ENCODE measurements at regions of chr1 and their contacts with region 1.

Region 1: DNA sequence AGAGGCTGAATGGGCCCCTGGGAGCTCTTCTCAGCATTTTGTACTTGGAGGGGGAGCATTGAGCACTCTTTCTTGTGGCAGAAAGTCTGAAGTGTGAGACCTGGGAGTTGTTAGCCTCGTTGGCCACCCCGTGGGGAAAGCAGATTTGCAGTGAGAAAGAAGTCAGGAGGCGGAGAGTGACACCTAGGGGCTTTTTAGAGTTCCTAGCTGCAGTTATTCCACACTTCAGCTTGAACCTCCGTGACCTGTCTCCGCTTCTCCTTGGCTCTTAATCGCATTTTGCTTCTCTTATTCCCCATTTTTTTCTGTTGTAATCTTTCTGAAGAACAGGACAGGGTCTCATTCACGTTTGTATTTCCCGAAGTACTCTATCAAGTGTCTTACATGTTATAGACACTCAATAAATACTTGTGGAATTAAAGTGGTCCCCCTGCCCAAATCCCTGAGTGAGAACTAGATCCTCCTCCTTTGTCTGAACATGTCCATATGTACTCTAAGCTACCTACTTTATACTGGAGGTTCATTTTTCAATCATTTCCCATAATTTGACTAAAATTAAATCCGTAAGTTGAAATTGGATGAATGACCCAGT is 14.5 kb upstream of the C1orf141 start:
- DNase-seq: peak; percentile 16 to 81 (median 62)
- ATAC-seq: peak; percentile 90
- H3K4me3 ChIP-seq: no peak overlapping the region
- H3K4me3 Mint-ChIP-seq: no peak overlapping the region
- H3K27ac ChIP-seq: no peak overlapping the region
- H3K27ac Mint-ChIP-seq: no peak overlapping the region
- H3K4me1 ChIP-seq: peaks cover 6% of the 10 kb centered on the region
- H3K4me1 Mint-ChIP-seq: peaks cover 23% of the 10 kb centered on the region
- H3K27me3 ChIP-seq: no peaks in the 10 kb centered on the region
- H3K27me3 Mint-ChIP-seq: peaks cover 7% of the 10 kb centered on the region
- CTCF ChIP-seq: peak; percentile 85

Region 2: DNA sequence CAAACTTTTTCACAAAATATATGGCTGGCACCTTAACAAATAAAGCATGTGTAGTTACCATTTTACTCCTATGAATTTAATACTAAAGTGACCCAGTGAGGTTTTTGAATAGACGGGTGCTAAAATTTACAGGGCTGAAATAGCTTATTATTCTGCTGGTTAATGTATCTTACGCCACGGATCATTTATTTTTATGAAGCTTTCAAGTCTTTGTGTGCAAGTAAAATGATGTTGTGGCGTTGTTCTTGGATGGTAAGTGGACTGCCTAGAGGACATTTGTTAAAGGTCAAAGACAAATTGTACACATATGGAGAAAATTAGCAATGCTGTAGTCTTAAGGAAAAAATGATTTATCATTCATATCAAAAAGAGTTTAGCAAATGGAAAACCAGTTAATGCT is 371.0 kb before region 1 on chr1:
- CTCF ChIA-PET with region 1: interaction called, 12 read pairs
- POLR2A ChIA-PET with region 1: no interaction called
- intact Hi-C with region 1: no loop called
- DNase-seq: no peak
- ATAC-seq: no peak
- H3K4me3 ChIP-seq: no peak overlapping the region
- H3K4me3 Mint-ChIP-seq: no peak overlapping the region
- H3K27ac ChIP-seq: no peak overlapping the region
- H3K27ac Mint-ChIP-seq: no peak overlapping the region
- H3K4me1 ChIP-seq: no peaks in the 10 kb centered on the region
- H3K4me1 Mint-ChIP-seq: no peaks in the 10 kb centered on the region
- H3K27me3 ChIP-seq: peaks cover 0 to 2% of the 10 kb centered on the region in 2 experiments
- H3K27me3 Mint-ChIP-seq: peaks cover 4% of the 10 kb centered on the region
- CTCF ChIP-seq: no peak

Region 3: GRCh38 chr1:66981679-66982078 is 167.6 kb before region 1 on chr1:
- CTCF ChIA-PET with region 1: interaction called, 10 read pairs
- POLR2A ChIA-PET with region 1: no interaction called
- intact Hi-C with region 1: no loop called
- DNase-seq: peak; percentile 18 to 86 (median 52)
- ATAC-seq: peak; percentile 96
- H3K4me3 ChIP-seq: peak overlapping the region; percentile 38 to 48
- H3K4me3 Mint-ChIP-seq: peak overlapping the region; percentile 75
- H3K27ac ChIP-seq: peak overlapping the region; percentile 44 to 78
- H3K27ac Mint-ChIP-seq: peak overlapping the region; percentile 79
- H3K4me1 ChIP-seq: peaks cover 22% of the 10 kb centered on the region
- H3K4me1 Mint-ChIP-seq: peaks cover 30% of the 10 kb centered on the region
- H3K27me3 ChIP-seq: no peaks in the 10 kb centered on the region
- H3K27me3 Mint-ChIP-seq: no peaks in the 10 kb centered on the region
- CTCF ChIP-seq: no peak

Region 4: DNA sequence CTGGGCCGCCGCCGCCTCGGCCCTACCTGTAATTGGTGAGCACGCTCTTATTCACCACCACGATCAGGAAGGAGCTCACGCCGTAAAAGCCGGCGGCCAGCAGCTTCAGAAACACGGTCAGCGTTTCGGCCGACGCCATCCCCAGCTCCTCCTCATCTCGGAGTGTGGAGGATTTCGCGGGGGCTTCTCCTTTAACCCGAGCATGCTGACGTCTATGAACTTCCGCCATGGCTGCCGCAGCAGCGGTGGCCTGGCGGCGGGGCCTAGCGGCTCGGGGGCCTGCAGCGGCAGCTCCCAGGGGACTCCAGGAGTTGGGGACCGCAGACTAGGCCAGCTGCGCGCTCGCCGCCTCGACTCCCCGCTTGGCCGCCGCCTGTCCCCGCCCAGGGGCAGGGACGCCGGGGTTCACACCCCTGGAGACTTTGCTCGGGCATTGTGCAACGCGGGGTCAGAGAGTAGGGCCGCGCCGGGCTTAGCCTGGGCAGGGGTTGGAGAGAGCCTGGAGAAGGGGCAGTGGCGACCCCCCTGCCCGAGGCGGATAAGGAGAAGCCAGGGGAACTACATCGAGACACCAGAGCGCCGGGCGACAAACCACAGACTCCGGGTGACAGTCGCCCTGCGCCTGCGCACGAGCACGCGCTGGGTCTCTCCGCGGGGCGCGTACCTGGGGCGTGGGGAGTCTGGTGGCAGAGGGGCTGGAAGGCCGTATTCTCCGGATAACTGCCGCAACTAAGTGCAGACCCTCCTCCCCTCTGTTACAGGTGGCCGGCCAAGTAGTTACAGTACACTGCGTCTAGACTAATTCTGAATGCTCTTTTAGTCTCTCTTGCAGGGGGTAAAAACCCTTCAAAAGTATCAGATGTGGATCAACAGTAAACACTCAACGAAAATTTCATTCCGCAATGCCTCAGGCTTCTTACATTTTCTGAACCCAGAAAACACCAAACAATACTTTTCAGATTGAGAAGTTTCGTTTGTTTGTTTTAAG is 95.2 kb before region 1 on chr1 and contains the start of gene SLC35D1:
- CTCF ChIA-PET with region 1: interaction called, 20 read pairs
- POLR2A ChIA-PET with region 1: interaction called, 6 read pairs
- intact Hi-C with region 1: loop called (anchors 1 to 2 kb)
- DNase-seq: peak; percentile 62 to 87 (median 83)
- ATAC-seq: peak; percentile 78
- H3K4me3 ChIP-seq: peak within 1 kb of the TSS; percentile 80 to 85
- H3K4me3 Mint-ChIP-seq: peak within 1 kb of the TSS; percentile 89
- H3K27ac ChIP-seq: peak within 1 kb of the TSS; percentile 90 to 96
- H3K27ac Mint-ChIP-seq: peak within 1 kb of the TSS; percentile 96
- H3K4me1 ChIP-seq: peaks cover 10% of the 10 kb centered on the region
- H3K4me1 Mint-ChIP-seq: peaks cover 35% of the 10 kb centered on the region
- H3K27me3 ChIP-seq: no peaks in the 10 kb centered on the region
- H3K27me3 Mint-ChIP-seq: no peaks in the 10 kb centered on the region
- CTCF ChIP-seq: no peak
- total RNA-seq, gene SLC35D1: 18.4 to 18.5 TPM

Region 5: GRCh38 chr1:67134695-67135094 is 14.6 kb before region 1 on chr1 and contains the start of gene C1orf141:
- CTCF ChIA-PET with region 1: interaction called, 18 read pairs
- POLR2A ChIA-PET with region 1: interaction called, 3 read pairs
- intact Hi-C with region 1: no loop called
- DNase-seq: peak in 4 of 9 experiments; percentile 17 to 53 (median 29)
- ATAC-seq: peak; percentile 55
- H3K4me3 ChIP-seq: peak within 1 kb of the TSS; percentile 31 to 39
- H3K4me3 Mint-ChIP-seq: peak within 1 kb of the TSS; percentile 86
- H3K27ac ChIP-seq: no peak within 1 kb of the TSS
- H3K27ac Mint-ChIP-seq: no peak within 1 kb of the TSS
- H3K4me1 ChIP-seq: peaks cover 4% of the 10 kb centered on the region
- H3K4me1 Mint-ChIP-seq: peaks cover 11% of the 10 kb centered on the region
- H3K27me3 ChIP-seq: peaks cover 0 to 3% of the 10 kb centered on the region in 2 experiments
- H3K27me3 Mint-ChIP-seq: peaks cover 3% of the 10 kb centered on the region
- CTCF ChIP-seq: no peak
- total RNA-seq, gene C1orf141: not detected

Region 6: DNA sequence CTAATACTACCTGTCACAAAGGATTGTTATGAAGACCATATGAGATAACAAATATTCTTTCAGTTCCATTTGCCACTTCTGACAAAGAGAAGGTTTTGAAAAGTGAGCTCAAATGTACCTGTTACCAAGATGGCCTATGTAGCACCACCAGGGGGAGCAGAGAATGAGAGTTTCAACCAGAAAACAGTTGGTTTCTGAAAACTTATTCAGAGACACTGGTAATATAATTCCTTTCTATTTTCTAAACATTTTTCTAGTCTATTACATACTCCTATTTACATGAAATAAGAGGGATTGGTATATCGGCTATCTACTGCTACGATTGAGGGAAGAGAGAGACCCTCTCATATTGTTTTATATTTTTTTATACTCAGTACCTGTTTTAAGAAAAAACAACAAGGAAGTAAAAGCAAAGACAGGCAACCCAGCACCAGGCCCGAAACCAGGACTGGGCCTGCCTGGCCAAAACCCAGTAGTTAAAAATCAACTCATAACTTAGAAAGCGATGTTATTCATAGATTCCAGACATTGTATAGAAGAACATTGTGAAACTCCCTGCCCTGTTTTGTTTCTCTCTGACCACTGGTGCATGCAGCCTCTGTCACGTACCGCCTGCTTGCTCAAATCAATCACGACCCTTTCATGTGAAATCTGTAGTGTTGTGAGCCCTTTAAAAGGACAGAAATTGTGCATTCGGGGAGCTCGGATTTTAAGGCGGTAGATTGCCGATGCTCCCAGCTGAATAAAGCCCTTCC is 65.3 kb after region 1 on chr1:
- CTCF ChIA-PET with region 1: interaction called, 234 read pairs
- POLR2A ChIA-PET with region 1: interaction called, 4 read pairs
- intact Hi-C with region 1: loop called (anchors 1 to 2 kb)
- DNase-seq: peak in 7 of 9 experiments; percentile 11 to 66 (median 45)
- ATAC-seq: peak; percentile 55
- H3K4me3 ChIP-seq: no peak overlapping the region
- H3K4me3 Mint-ChIP-seq: no peak overlapping the region
- H3K27ac ChIP-seq: no peak overlapping the region
- H3K27ac Mint-ChIP-seq: no peak overlapping the region
- H3K4me1 ChIP-seq: peaks cover 10% of the 10 kb centered on the region
- H3K4me1 Mint-ChIP-seq: peaks cover 17% of the 10 kb centered on the region
- H3K27me3 ChIP-seq: no peaks in the 10 kb centered on the region
- H3K27me3 Mint-ChIP-seq: no peaks in the 10 kb centered on the region
- CTCF ChIP-seq: peak; percentile 65